ENCODE measurements at regions of chr1 and their contacts with region 1.

Region 1: GRCh38 chr1:152869808-152870419 is 8.2 kb upstream of the SMCP start:
- DNase-seq: peak; percentile 91
- H3K4me3 Mint-ChIP-seq: no peak overlapping the region
- H3K27ac Mint-ChIP-seq: no peak overlapping the region
- H3K4me1 Mint-ChIP-seq: peaks cover 20% of the 10 kb centered on the region
- H3K27me3 Mint-ChIP-seq: no peaks in the 10 kb centered on the region
- CTCF ChIP-seq: peak; percentile 95

Region 2: DNA sequence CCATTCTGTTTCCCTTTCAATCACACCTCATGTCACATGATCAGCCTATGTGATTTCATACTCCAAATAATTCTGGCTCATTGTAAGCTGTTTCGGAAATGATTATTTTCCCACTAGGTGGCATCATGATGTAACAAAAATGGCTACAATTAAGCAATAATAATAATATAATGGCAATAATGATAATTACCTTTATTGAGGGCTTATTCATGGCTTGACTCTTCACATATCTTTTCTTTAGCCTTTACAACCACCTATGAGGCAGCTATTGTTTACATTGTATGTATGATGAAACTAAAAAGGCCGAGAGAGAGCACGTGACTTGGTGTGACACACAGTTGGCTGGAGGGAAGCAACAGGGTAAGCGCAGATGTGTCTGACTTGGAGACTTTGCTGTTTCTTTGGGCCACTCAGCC is 124.6 kb before region 1 on chr1:
- CTCF ChIA-PET with region 1: interaction called, 26 read pairs
- POLR2A ChIA-PET with region 1: interaction called, 4 read pairs
- intact Hi-C with region 1: loop called (anchors 1 kb)
- DNase-seq: peak; percentile 89
- H3K4me3 Mint-ChIP-seq: no peak overlapping the region
- H3K27ac Mint-ChIP-seq: peak overlapping the region; percentile 71
- H3K4me1 Mint-ChIP-seq: peaks cover 34% of the 10 kb centered on the region
- H3K27me3 Mint-ChIP-seq: no peaks in the 10 kb centered on the region
- CTCF ChIP-seq: no peak

Region 3: DNA sequence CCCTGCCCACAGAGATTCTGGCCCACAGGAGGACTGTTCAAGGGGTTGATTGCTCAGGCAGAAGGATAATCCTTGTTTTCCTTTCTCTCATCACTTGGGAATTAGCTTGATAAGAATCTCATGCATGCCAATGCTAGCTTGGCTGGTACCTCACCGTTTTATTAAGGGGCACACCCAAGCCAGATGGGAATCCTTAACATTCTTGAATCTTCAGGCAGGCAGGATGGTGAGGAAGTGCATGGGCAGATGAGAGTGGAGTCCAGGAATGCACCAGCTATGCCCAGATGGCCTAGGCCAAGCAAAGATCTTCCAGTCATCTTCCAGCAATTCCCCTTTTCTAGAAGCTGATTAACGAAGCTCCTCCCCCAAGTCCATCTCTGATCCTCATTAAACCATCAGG is 14.3 kb before region 1 on chr1:
- CTCF ChIA-PET with region 1: interaction called, 100 read pairs
- POLR2A ChIA-PET with region 1: interaction called, 3 read pairs
- intact Hi-C with region 1: no loop called
- DNase-seq: no peak
- H3K4me3 Mint-ChIP-seq: no peak overlapping the region
- H3K27ac Mint-ChIP-seq: no peak overlapping the region
- H3K4me1 Mint-ChIP-seq: no peaks in the 10 kb centered on the region
- H3K27me3 Mint-ChIP-seq: no peaks in the 10 kb centered on the region
- CTCF ChIP-seq: no peak

Region 4: DNA sequence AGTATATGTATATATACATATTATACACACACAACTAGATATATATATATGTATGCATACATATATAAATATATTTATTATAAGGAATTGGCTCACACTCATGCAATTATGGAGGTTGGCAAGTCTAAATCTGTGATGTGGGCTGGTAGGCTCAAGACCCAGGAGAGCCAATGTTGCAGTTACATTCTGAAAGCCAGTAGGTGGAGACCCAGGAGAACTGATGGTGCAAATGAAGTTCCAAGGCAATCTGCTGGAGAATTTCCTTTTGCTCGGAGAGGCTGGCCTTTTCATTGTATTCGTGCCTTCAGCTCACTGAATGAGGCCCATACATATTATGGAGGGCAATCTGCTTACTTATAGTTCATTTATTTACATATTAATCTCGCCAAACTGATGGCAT is 47.9 kb after region 1 on chr1:
- CTCF ChIA-PET with region 1: interaction called, 186 read pairs
- POLR2A ChIA-PET with region 1: no interaction called
- intact Hi-C with region 1: no loop called
- DNase-seq: peak; percentile 37
- H3K4me3 Mint-ChIP-seq: no peak overlapping the region
- H3K27ac Mint-ChIP-seq: no peak overlapping the region
- H3K4me1 Mint-ChIP-seq: peaks cover 8% of the 10 kb centered on the region
- H3K27me3 Mint-ChIP-seq: no peaks in the 10 kb centered on the region
- CTCF ChIP-seq: peak; percentile 40

Region 5: DNA sequence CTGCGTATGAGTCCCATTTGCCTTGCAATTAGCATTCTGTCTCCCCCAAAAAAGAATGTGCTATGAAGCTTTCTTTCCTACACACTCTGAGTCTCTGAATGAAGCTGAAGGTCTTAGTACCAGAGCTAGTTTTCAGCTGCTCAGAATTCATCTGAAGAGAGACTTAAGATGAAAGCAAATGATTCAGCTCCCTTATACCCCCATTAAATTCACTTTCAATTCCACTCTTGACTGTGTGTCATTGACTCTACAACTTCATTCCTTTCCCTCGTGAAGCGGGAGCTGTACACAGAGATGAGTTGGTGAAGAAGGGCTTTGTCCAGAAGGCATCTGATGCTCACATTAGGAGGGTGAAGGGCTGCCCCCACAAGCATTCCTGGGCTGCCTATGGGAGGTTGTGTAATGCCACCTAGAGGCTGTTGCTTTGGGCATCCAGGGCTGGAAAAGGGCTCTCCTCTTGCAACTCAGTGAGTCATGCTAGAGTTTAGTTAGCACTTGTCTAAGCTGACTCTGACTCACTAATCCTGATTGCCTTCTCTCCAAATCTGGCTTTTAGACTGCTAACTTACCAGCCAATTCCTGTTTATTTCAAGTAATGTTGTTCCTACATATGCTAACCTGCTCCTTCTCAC is 162.9 kb after region 1 on chr1:
- CTCF ChIA-PET with region 1: interaction called, 61 read pairs
- POLR2A ChIA-PET with region 1: no interaction called
- intact Hi-C with region 1: loop called (anchors 1 kb)
- DNase-seq: peak; percentile 97
- H3K4me3 Mint-ChIP-seq: no peak overlapping the region
- H3K27ac Mint-ChIP-seq: peak overlapping the region; percentile 25
- H3K4me1 Mint-ChIP-seq: peaks cover 12% of the 10 kb centered on the region
- H3K27me3 Mint-ChIP-seq: no peaks in the 10 kb centered on the region
- CTCF ChIP-seq: peak; percentile 68

Region 6: DNA sequence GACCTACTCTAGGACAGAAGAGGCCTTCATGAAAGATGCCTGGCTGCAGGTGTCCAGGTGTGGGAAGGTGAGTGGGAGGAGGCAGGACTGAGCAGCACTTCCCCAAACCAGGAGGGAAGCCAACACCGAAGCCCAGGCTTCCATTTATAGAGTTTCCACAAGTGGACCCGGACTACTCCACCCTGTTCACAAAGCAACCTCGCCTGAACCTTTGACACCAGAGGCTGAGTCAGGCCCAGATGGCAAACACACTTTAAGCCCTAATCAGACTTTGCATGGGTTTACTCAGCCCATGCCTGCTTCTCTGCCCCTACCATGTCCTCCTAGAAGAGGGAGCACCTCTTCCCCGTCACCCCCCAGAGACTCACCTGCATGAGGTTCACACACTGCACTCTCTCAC is 361.4 kb after region 1 on chr1:
- CTCF ChIA-PET with region 1: interaction called, 46 read pairs
- POLR2A ChIA-PET with region 1: no interaction called
- intact Hi-C with region 1: no loop called
- DNase-seq: no peak
- H3K4me3 Mint-ChIP-seq: no peak overlapping the region
- H3K27ac Mint-ChIP-seq: no peak overlapping the region
- H3K4me1 Mint-ChIP-seq: peaks cover 8% of the 10 kb centered on the region
- H3K27me3 Mint-ChIP-seq: peaks cover 14% of the 10 kb centered on the region
- CTCF ChIP-seq: no peak